Ascending aorta (tissue), 2 donors: ENCODE measurements at regions of chr19 and their contacts with region 1.

Region 1: DNA sequence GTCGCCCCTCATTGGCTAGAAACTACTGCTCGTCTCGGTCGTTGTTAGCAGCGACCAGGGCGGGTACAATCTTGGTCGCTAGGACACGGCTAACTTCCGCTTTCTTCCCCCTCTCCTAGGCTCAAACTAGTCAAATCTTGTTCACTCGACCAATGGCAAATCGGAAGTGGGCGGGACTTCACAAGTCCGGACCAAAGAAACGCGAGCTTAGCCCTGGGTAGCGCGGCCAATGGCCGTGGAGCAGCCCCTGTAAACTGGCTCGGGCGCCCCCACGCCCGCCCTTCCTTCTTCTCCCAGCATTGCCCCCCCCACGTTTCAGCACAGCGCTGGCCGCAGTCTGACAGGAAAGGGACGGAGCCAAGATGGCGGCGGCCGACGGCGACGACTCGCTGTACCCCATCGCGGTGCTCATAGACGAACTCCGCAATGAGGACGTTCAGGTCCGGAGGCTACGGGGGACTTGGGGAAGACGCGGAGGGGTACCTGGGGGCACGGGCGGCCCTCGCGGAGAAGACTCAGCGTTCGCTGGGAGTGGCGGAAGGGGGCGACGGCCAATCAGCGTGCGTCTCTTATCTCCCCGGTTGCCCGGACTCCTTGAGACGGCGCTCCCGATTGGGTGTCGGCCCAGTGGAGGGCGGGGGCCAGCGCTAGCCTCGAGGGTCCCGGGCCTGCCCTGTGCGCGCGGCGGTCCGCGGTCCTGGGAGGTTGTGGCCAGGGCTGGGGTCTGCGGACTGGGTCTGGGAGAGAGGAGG is at the start of gene PPP2R1A:
- DNase-seq: peak; percentile 42 to 100
- H3K4me3 ChIP-seq: peak within 1 kb of the TSS; percentile 58 to 91
- H3K27ac ChIP-seq: peak within 1 kb of the TSS; percentile 98
- H3K4me1 ChIP-seq: peaks cover 10 to 20% of the 10 kb centered on the region in 2 donors
- H3K27me3 ChIP-seq: no peaks in the 10 kb centered on the region
- CTCF ChIP-seq: no peak
- total RNA-seq, gene PPP2R1A: 215 TPM

Region 2: DNA sequence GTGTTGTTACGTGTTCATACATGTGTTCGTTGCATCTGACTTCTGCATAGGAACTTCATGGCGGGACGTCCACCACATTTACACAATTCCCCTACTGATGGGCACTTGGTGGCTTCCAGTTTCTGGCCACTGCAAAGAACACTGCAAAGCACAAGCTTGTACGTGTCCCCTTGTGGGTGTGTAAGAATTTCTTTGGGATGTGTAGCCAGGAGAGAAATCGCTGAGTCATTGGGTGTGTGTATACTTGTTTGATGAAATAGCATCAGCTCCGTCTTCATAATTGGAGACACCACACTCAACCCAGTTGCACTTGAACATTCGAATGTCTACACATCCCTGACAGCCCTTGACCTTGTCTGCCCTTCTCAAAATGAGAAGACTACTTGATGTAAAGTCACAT is 1256.3 kb before region 1 on chr19:
- intact Hi-C with region 1: no loop called
- DNase-seq: no peak
- H3K4me3 ChIP-seq: no peak overlapping the region
- H3K27ac ChIP-seq: no peak overlapping the region
- H3K4me1 ChIP-seq: no peaks in the 10 kb centered on the region
- H3K27me3 ChIP-seq: no peaks in the 10 kb centered on the region
- CTCF ChIP-seq: no peak

Region 3: GRCh38 chr19:52028027-52028779 is 161.7 kb before region 1 on chr19 and contains the start of gene ZNF614:
- intact Hi-C with region 1: loop called (anchors 5 kb)
- DNase-seq: peak; percentile 71 to 94
- H3K4me3 ChIP-seq: peak within 1 kb of the TSS; percentile 81 to 96
- H3K27ac ChIP-seq: peak within 1 kb of the TSS; percentile 94 to 98
- H3K4me1 ChIP-seq: peaks cover 0 to 5% of the 10 kb centered on the region in 2 donors
- H3K27me3 ChIP-seq: no peaks in the 10 kb centered on the region
- CTCF ChIP-seq: no peak
- total RNA-seq, gene ZNF614: 1.7 TPM

Region 4: GRCh38 chr19:52070476-52070875 is 119.4 kb before region 1 on chr19:
- intact Hi-C with region 1: no loop called
- DNase-seq: no peak
- H3K4me3 ChIP-seq: no peak overlapping the region
- H3K27ac ChIP-seq: no peak overlapping the region
- H3K4me1 ChIP-seq: no peaks in the 10 kb centered on the region
- H3K27me3 ChIP-seq: no peaks in the 10 kb centered on the region
- CTCF ChIP-seq: no peak

Region 5: DNA sequence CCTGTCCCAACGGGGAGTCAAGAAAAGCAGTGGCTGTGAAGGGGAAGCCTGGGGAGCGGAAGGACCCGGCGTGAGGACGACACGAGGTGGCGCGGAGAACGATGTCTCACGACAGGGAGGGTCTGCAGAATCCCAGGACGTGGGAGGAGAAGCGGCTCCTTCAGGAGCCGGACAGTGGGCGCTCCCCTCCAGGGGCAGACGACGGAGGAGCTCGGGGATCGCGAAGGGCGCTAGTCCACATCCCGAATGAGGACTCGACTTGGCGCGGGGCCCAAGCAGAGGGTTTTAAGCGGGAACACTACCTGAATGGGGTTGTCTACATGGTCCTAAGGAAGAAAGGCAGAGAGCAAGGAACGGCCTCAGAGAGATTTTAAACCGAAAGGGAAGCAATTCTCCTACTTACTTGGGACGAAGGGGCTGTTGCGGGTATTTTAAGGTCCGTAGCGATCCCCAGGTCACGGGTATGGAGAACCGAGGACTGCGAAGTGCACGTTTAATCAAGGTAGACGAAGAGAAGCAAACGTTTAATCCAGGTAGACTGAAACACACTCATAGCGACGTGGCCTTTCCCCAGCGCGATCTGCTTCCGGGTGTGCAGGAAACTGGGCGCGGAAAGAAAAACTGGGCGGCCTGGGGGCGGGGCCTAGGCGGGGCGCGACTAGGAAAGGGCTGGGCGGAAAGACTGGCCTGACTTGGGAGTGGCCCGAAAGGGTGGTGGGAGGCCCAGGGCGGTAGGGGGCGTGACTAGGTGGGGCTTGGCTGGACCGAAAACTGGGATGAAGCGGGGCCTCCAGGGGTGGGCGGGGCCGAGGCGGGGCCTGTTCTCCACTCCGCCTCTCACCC is 94.5 kb before region 1 on chr19 and contains the start of gene ZNF841:
- intact Hi-C with region 1: loop called (anchors 5 kb)
- DNase-seq: peak; percentile 85 to 97
- H3K4me3 ChIP-seq: peak within 1 kb of the TSS; percentile 91 to 95
- H3K27ac ChIP-seq: peak within 1 kb of the TSS; percentile 75 to 87
- H3K4me1 ChIP-seq: no peaks in the 10 kb centered on the region
- H3K27me3 ChIP-seq: no peaks in the 10 kb centered on the region
- CTCF ChIP-seq: no peak
- total RNA-seq, gene ZNF841: 6.9 TPM

Region 6: GRCh38 chr19:52171321-52172169 is 18.4 kb before region 1 on chr19 and contains the start of gene ZNF836:
- intact Hi-C with region 1: loop called (anchors 1 kb)
- DNase-seq: peak; percentile 53 to 93
- H3K4me3 ChIP-seq: peak within 1 kb of the TSS; percentile 70 to 76
- H3K27ac ChIP-seq: peak within 1 kb of the TSS; percentile 84 to 91
- H3K4me1 ChIP-seq: peaks cover 0 to 6% of the 10 kb centered on the region in 2 donors
- H3K27me3 ChIP-seq: no peaks in the 10 kb centered on the region
- CTCF ChIP-seq: no peak
- total RNA-seq, gene ZNF836: 2.8 TPM

Region 7: DNA sequence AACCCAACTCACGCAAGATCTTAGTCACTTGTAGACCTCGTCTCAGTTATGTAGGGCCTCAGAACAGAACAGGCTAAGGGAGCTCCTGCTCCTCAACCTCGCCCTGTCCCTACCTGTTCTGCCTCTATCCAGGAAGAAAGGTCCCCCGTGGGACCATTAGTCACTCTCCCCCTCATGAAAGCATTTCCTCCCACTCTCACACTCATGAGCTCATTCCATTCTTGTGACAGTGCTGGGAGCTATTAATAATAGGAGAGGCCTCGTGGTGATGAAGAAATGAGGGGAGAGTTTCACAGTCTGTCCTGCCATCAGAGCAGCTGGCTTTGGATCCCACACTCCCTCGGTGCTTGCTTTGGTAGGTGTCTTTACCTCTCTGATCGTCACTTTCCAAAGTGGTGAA is 10.1 kb after region 1 on chr19:
- intact Hi-C with region 1: loop called (anchors 1 kb)
- DNase-seq: peak; percentile 52 to 91
- H3K4me3 ChIP-seq: peak overlapping the region in 1 of 2 donors; percentile 11
- H3K27ac ChIP-seq: peak overlapping the region; percentile 78 to 90
- H3K4me1 ChIP-seq: peaks cover 13 to 18% of the 10 kb centered on the region in 2 donors
- H3K27me3 ChIP-seq: no peaks in the 10 kb centered on the region
- CTCF ChIP-seq: no peak